ENCODE measurements at regions of chr6 and their contacts with region 1.

Region 1: DNA sequence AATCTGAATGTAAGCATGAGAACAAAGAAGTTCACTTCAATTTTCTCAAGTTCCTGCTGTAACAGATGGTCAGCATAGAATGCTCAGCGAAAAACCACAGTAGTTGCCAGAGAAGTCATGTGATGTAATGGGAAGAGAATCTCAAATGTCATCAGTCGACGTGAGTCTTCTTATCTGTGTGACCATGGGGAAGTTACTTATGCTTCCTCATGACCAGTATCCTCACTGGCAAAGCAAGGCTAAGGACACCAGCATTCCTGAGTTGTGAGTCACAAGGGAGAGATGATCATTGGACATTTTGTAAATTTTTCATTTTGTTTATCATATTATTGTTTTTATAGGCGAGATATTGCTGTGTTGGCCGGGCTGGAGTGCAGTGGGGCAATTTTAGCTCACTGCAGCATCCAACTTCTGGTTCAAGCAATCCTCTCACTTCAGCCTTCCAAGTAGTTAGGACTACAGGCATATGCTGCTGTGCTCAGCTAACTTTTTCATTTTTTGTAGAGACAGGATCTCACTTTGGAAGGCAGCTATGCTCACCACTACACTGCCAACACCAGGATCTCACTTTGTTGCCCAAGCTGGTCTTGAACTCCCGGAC is 21.9 kb downstream of the SGK1 start:
- DNase-seq: peak; percentile 79 to 91 (median 84)
- ATAC-seq: peak; percentile 92
- H3K4me3 ChIP-seq: no peak overlapping the region
- H3K27ac ChIP-seq: peak overlapping the region; percentile 59
- H3K4me1 ChIP-seq: peaks cover 26 to 31% of the 10 kb centered on the region in 2 experiments
- H3K27me3 ChIP-seq: no peaks in the 10 kb centered on the region
- CTCF ChIP-seq: no peak
- EP300 ChIP-seq: peak; percentile 93
- POLR2A ChIP-seq: no peak
- RAD21 ChIP-seq: peak in 1 of 2 experiments; percentile 28; a peak in 2 of 4 replicates

Region 2: DNA sequence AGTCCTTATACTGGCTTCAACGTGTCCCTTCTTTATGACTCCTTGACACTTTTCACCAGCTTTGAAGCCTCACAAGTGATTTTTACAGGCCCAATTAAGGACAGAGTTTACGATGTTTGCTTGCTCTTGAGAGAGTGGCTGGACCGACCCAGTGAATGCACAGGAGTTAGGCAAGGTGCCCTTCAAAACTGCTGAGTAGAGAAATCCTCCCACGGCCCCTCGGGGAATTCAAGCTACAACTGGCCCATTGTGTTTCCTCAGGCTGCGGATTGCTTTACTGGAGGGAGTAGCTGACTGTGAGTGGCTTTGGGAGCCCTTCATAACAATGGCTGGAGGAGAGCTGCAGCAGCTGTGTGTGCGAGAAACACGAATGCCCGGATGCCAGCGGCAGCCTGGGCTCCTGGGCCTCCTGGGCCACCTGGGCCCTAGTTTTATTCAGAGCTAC is 28.1 kb before region 1 on chr6:
- CTCF ChIA-PET with region 1: no interaction called
- POLR2A ChIA-PET with region 1: no interaction called
- in situ Hi-C with region 1: no loop called
- intact Hi-C with region 1: no loop called
- DNase-seq: no peak
- ATAC-seq: no peak
- H3K4me3 ChIP-seq: no peak overlapping the region
- H3K27ac ChIP-seq: no peak overlapping the region
- H3K4me1 ChIP-seq: no peaks in the 10 kb centered on the region
- H3K27me3 ChIP-seq: no peaks in the 10 kb centered on the region
- CTCF ChIP-seq: no peak
- EP300 ChIP-seq: no peak
- POLR2A ChIP-seq: no peak
- RAD21 ChIP-seq: no peak

Region 3: DNA sequence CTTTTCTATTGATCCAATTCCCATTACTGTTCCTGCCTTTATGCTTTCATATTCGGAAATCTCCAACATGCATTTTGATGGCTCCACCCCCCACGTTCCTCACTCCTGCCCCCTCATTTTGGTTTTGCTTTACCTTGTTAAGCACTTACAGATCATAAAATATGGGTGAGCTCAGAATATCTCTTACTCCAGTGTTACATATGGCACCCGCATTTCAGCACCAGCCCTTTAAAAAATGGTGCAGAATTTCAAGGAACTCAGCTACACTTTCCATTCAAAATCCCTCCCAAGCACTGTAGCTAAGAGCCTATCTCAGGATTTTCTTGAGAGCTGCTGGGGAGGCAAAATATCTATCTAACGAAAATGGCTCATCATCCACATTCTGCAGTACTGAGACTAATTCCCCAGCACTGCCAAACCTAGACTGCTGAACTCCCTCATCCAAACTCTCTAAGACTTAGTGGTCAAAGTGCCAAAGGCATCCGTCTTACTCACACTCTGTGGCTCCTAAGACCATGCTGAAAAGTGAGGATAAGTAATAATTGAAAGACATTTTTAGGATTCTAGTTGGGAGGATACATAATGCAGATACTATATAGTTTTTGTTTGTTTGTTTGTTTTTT is 14.0 kb after region 1 on chr6:
- CTCF ChIA-PET with region 1: interaction called, 6 read pairs
- POLR2A ChIA-PET with region 1: interaction called, 20 read pairs
- in situ Hi-C with region 1: no loop called
- intact Hi-C with region 1: no loop called
- DNase-seq: no peak
- ATAC-seq: no peak; the same call in 2 of the 3 replicates
- H3K4me3 ChIP-seq: no peak overlapping the region
- H3K27ac ChIP-seq: no peak overlapping the region
- H3K4me1 ChIP-seq: peaks cover 0 to 9% of the 10 kb centered on the region in 2 experiments; a peak in 2 of 5 replicates
- H3K27me3 ChIP-seq: no peaks in the 10 kb centered on the region
- CTCF ChIP-seq: no peak
- EP300 ChIP-seq: no peak
- POLR2A ChIP-seq: no peak
- RAD21 ChIP-seq: no peak

Measured in K562 (cell line).